ENCODE measurements at regions of chr3 and their contacts with region 1.

Region 1: DNA sequence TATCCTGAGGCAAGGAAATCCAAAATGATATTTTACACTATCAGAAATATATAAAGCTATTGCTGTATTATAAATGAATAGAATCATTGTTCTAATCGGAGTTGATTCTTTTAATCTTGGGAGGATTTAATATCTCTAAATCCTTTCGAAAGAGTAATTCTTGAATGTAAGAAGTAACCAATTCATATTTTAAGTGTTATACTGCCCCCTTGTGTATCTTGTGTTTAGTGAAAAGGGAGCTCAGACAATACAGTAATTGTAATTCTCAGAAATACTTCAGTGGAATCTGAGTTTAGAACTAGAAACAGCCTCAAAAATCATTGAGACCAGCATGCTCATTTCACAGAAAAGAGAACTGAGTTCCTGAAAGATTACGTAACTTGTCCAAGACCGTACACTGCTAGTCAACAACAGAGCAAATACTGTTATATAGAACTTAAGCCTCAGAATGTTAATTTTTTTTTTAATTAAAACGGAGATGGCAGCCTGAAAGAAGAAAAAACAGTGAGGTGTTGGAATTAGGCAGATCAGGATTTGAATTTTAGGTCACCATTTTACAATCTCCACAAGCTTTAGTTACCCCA is 42.9 kb downstream of the PLCH1 start:
- DNase-seq: peak; percentile 36 to 63
- ATAC-seq: peak; percentile 59 to 83; a peak in 4 of 6 replicates
- H3K4me3 ChIP-seq: no peak overlapping the region
- H3K27ac ChIP-seq: no peak overlapping the region; a peak in 1 of 6 replicates
- H3K4me1 ChIP-seq: peaks cover 6% of the 10 kb centered on the region; the same call in 1 of the 3 replicates
- CTCF ChIP-seq: peak; percentile 79
- EP300 ChIP-seq: no peak
- POLR2A ChIP-seq: no peak
- RAD21 ChIP-seq: peak; percentile 88 to 92

Region 2: DNA sequence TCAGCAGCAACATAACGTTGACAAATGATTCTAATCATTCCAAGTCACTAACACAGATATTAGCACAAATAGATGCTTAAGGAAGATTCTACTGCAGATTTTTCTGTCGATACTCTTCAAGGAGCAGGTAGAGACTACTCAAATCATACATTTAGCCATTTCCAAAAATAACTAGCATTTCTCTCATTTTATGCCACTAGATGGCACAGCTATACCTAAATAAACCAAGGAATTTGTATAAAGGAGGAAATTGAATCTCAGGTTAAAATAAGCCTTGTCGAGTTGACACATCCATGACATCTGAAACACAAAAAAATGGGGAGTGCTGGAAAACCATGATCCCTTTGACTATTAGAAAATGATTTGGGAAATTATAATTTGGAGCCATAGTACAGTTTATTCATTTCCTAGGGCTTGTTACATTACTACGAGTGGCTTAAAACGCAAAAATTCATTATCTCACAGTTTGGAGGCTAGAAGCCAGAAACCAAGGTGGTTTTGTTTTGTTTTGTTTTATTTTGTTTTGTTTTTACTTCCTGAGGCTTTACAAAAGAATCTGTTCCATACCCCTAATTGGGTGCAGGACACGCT is 349.0 kb before region 1 on chr3:
- CTCF ChIA-PET with region 1: interaction called, 62 read pairs
- POLR2A ChIA-PET with region 1: interaction called, 3 read pairs
- DNase-seq: peak; percentile 52 to 55
- ATAC-seq: peak; percentile 73 to 79; a peak in 3 of 6 replicates
- H3K4me3 ChIP-seq: no peak overlapping the region
- H3K27ac ChIP-seq: no peak overlapping the region
- H3K4me1 ChIP-seq: no peaks in the 10 kb centered on the region
- CTCF ChIP-seq: peak; percentile 80
- EP300 ChIP-seq: no peak
- POLR2A ChIP-seq: no peak
- RAD21 ChIP-seq: peak; percentile 80 to 83

Region 3: GRCh38 chr3:155382396-155383042 is 319.5 kb before region 1 on chr3:
- CTCF ChIA-PET with region 1: interaction called, 192 read pairs
- POLR2A ChIA-PET with region 1: interaction called, 3 read pairs
- DNase-seq: peak; percentile 66 to 75
- ATAC-seq: peak; percentile 99 to 100
- H3K4me3 ChIP-seq: no peak overlapping the region
- H3K27ac ChIP-seq: 0 out of 6 replicates have a peak overlapping the region, but pooled peaks of 1 of the 2 experiments have one; percentile 6
- H3K4me1 ChIP-seq: no peaks in the 10 kb centered on the region
- CTCF ChIP-seq: peak; percentile 88
- EP300 ChIP-seq: no peak
- POLR2A ChIP-seq: no peak
- RAD21 ChIP-seq: peak; percentile 96

Region 4: DNA sequence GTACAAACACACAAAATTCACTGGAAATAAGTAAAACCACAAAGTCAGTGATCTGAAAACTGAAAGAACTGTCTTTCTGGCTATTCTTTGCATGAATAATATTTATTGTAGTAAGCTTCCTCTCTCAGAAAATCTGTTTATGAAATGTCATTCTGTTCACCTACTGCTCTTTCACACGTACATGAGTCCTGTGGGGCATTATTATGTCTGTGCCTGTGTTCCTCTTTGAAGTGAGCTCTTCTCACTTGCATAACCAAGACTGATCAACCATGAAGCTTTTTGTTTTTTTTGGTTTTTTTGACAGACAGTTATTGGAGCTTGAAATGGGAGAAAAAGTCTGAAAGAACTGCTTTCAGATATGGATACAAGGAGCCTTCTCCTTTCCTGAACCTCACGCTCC is 152.9 kb before region 1 on chr3:
- CTCF ChIA-PET with region 1: no interaction called
- POLR2A ChIA-PET with region 1: no interaction called
- DNase-seq: no peak
- ATAC-seq: no peak
- H3K4me3 ChIP-seq: no peak overlapping the region
- H3K27ac ChIP-seq: no peak overlapping the region
- H3K4me1 ChIP-seq: peaks cover 11% of the 10 kb centered on the region
- CTCF ChIP-seq: no peak
- EP300 ChIP-seq: no peak
- POLR2A ChIP-seq: no peak
- RAD21 ChIP-seq: no peak

Region 5: DNA sequence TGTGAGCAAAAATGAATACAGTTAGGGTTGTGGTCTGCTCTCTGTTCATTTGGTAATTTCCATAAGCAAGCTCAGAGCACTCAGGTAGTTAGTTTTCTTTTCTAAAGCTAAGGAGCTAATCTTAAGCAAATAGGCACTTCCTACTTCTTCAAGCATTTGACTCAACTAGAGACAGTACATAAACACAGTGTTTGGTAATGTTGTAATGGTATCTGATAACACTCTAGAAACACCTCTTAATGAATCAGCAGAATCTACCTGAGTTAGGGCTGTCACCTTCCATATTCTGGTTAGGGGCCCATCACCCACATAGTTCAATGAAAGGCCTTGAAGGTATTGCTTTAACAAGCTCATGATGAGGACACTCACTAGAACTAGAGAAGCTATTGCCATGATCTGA is 40.2 kb before region 1 on chr3:
- CTCF ChIA-PET with region 1: interaction called, 10 read pairs
- POLR2A ChIA-PET with region 1: no interaction called
- DNase-seq: peak in 1 of 2 experiments; percentile 14
- ATAC-seq: no peak
- H3K4me3 ChIP-seq: no peak overlapping the region
- H3K27ac ChIP-seq: peak overlapping the region; percentile 15 to 44; a peak in 4 of 6 replicates
- H3K4me1 ChIP-seq: peaks cover 52% of the 10 kb centered on the region
- CTCF ChIP-seq: no peak
- EP300 ChIP-seq: no peak
- POLR2A ChIP-seq: no peak
- RAD21 ChIP-seq: no peak

Region 6: DNA sequence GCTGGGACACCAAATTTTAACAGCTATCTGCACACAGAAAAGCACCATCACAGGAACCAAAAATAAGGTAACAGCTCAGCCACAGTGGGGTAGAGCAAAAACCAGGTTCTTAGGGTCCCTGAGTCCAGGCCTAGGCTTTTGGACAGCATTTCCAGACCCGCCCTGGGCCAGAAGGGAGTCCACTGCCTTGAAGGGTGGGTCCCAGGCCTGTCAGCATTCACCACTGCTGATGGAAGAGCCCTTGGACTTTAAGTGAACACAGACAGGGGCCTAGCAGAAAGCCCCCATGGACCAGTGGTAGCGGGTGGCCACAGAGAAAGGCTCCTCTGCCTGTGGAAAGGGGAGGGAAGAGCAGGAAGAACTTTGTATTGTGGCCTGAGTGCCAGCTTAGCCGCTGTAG is 13.5 kb before region 1 on chr3:
- CTCF ChIA-PET with region 1: interaction called, 28 read pairs
- POLR2A ChIA-PET with region 1: no interaction called
- DNase-seq: no peak
- ATAC-seq: no peak
- H3K4me3 ChIP-seq: no peak overlapping the region
- H3K27ac ChIP-seq: no peak overlapping the region
- H3K4me1 ChIP-seq: no peaks in the 10 kb centered on the region
- CTCF ChIP-seq: no peak
- EP300 ChIP-seq: no peak
- POLR2A ChIP-seq: no peak
- RAD21 ChIP-seq: no peak

Region 7: GRCh38 chr3:155712008-155712407 is 10.0 kb after region 1 on chr3:
- CTCF ChIA-PET with region 1: interaction called, 29 read pairs
- POLR2A ChIA-PET with region 1: no interaction called
- DNase-seq: no peak
- ATAC-seq: no peak
- H3K4me3 ChIP-seq: no peak overlapping the region
- H3K27ac ChIP-seq: no peak overlapping the region
- H3K4me1 ChIP-seq: no peaks in the 10 kb centered on the region
- CTCF ChIP-seq: no peak
- EP300 ChIP-seq: no peak
- POLR2A ChIP-seq: no peak
- RAD21 ChIP-seq: no peak